H1 (cell line): ENCODE measurements at regions of chrX and their contacts with region 1.

Region 1: GRCh38 chrX:53340852-53341607 is 59.6 kb upstream of the IQSEC2 start:
- DNase-seq: no peak
- H3K4me3 ChIP-seq: no peak overlapping the region
- H3K27ac ChIP-seq: no peak overlapping the region
- H3K4me1 ChIP-seq: no peaks in the 10 kb centered on the region
- H3K27me3 ChIP-seq: no peaks in the 10 kb centered on the region
- CTCF ChIP-seq: no peak
- EP300 ChIP-seq: no peak
- POLR2A ChIP-seq: no peak
- RAD21 ChIP-seq: no peak

Region 2: GRCh38 chrX:53294024-53294648 is 46.9 kb before region 1 on chrX:
- CTCF ChIA-PET with region 1: no interaction called
- POLR2A ChIA-PET with region 1: no interaction called
- DNase-seq: no peak
- H3K4me3 ChIP-seq: no peak overlapping the region
- H3K27ac ChIP-seq: no peak overlapping the region
- H3K4me1 ChIP-seq: no peaks in the 10 kb centered on the region; a peak in 2 of 7 replicates
- H3K27me3 ChIP-seq: no peaks in the 10 kb centered on the region
- CTCF ChIP-seq: peak in 2 of 3 experiments; percentile 28 to 29; a peak in 3 of 4 replicates
- EP300 ChIP-seq: no peak
- POLR2A ChIP-seq: no peak
- RAD21 ChIP-seq: peak; percentile 47 to 61; a peak in 3 of 4 replicates

Region 3: GRCh38 chrX:53330331-53330730 is 10.7 kb before region 1 on chrX:
- CTCF ChIA-PET with region 1: interaction called, 11 read pairs
- POLR2A ChIA-PET with region 1: no interaction called
- DNase-seq: no peak
- H3K4me3 ChIP-seq: no peak overlapping the region
- H3K27ac ChIP-seq: no peak overlapping the region
- H3K4me1 ChIP-seq: no peaks in the 10 kb centered on the region
- H3K27me3 ChIP-seq: no peaks in the 10 kb centered on the region
- CTCF ChIP-seq: no peak
- EP300 ChIP-seq: no peak
- POLR2A ChIP-seq: no peak
- RAD21 ChIP-seq: no peak